ENCODE measurements at regions of chr1 and their contacts with region 1.

Region 1: DNA sequence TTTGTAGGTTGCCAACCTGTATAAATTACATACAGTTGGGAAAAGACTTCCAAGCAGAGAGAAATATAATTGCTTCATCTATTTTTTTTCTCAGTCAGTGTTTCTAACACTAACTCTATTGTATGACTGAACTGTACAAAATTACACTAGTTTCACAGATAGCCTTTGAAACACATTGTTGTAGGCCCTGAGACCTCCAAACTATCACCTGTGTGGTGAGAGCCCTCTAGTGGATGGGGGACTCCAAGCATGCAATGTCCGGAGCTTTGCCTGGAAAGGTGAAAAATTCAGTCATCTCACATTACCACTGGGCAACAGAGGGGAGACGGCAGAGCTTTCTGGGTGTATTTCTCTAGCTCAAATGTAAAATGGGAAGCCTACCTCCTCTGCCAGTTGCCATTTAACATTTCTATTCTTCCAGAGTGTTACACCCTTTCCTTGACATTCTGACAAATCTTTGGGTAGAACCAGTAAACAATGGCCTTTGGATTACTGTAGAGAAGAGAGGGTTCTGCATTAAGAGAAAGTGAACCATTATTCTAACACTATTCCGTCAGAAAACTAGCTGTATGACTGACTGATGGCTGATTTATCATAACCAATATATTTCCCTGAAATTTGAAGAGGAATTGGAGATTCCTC is 212.2 kb downstream of the LYPLAL1 start:
- DNase-seq: peak; percentile 64 to 72
- H3K4me3 ChIP-seq: no peak overlapping the region
- H3K4me3 Mint-ChIP-seq: no peak overlapping the region
- H3K27ac Mint-ChIP-seq: no peak overlapping the region
- H3K4me1 ChIP-seq: peaks cover 41% of the 10 kb centered on the region
- H3K4me1 Mint-ChIP-seq: peaks cover 10% of the 10 kb centered on the region
- H3K27me3 ChIP-seq: no peaks in the 10 kb centered on the region
- H3K27me3 Mint-ChIP-seq: no peaks in the 10 kb centered on the region
- CTCF ChIP-seq: peak; percentile 69 to 80

Region 2: DNA sequence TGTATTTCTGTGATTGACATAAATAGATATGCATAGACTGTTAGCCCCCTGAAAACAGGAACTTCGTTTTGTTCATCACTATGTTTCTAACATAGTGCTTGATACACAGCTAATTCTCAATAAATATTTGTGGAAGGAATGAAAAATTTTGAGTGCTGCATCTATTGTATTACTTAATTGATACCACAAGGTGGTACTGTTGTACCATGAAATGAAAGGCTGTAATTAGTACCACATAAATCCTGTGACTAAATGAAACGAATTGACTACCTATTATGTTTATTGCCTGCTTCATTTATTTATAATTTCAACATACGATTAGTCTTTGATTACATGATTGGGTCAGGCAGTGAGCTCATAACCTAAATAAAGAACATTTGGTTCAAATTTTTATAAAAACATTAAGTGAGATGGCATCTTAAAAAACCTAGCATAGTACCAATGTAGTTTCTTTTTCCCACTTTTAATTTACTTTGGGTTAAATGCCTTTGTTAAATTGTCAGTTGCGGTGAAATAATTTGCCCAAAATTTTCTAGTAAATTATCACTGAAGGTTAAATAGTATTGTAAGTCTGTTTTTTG is 1055.8 kb before region 1 on chr1:
- CTCF ChIA-PET with region 1: no interaction called
- POLR2A ChIA-PET with region 1: no interaction called
- intact Hi-C with region 1: loop called (anchors 10 kb)
- DNase-seq: peak in 1 of 2 experiments; percentile 9
- H3K4me3 ChIP-seq: no peak overlapping the region
- H3K4me3 Mint-ChIP-seq: no peak overlapping the region
- H3K27ac Mint-ChIP-seq: no peak overlapping the region
- H3K4me1 ChIP-seq: no peaks in the 10 kb centered on the region
- H3K4me1 Mint-ChIP-seq: no peaks in the 10 kb centered on the region
- H3K27me3 ChIP-seq: no peaks in the 10 kb centered on the region
- H3K27me3 Mint-ChIP-seq: no peaks in the 10 kb centered on the region
- CTCF ChIP-seq: peak; percentile 28 to 69

Region 3: GRCh38 chr1:219173758-219174588 is 211.9 kb before region 1 on chr1 and contains the start of gene LYPLAL1:
- CTCF ChIA-PET with region 1: interaction called, 4 read pairs
- POLR2A ChIA-PET with region 1: no interaction called
- intact Hi-C with region 1: loop called (anchors 10 kb)
- DNase-seq: peak; percentile 84 to 90
- H3K4me3 ChIP-seq: peak within 1 kb of the TSS; percentile 75
- H3K4me3 Mint-ChIP-seq: peak within 1 kb of the TSS; percentile 96
- H3K27ac Mint-ChIP-seq: peak within 1 kb of the TSS; percentile 94
- H3K4me1 ChIP-seq: 0 out of 2 replicates have a peak, but pooled peaks cover 4% of the 10 kb centered on the region
- H3K4me1 Mint-ChIP-seq: peaks cover 23% of the 10 kb centered on the region
- H3K27me3 ChIP-seq: no peaks in the 10 kb centered on the region
- H3K27me3 Mint-ChIP-seq: no peaks in the 10 kb centered on the region
- CTCF ChIP-seq: peak in 1 of 2 experiments; percentile 26
- total RNA-seq, gene LYPLAL1: 20.4 and 27.1 TPM in 2 replicates

Region 4: DNA sequence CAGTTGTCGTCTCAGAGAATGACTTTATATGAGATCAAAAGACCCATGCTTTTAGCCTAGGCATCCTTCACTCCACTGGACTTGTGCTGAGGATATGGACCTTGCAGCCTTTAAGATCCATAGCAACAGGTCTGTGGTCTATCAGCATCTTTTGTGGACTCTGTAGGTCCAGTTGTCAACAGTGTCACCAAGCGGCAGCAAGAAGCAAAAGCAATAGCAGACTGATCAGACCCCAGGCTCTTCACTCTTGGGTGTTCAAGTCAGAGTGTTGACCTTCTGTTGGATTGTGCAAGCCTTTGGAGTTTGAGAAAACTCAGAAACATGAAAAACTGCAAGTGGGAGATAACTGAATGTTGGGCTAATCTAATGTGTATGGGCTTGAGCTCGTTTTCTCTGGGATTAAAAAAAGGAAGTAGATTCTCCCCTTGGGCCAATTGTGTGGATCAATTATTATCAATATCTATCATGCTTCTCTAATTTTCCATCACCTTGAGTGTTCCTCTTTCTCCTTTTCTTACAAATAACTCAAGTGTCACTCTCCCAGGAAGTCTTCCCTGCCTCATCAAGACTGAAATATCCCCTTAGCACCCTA is 68.0 kb before region 1 on chr1:
- CTCF ChIA-PET with region 1: no interaction called
- POLR2A ChIA-PET with region 1: no interaction called
- intact Hi-C with region 1: loop called (anchors 5 kb)
- DNase-seq: peak; percentile 16 to 39
- H3K4me3 ChIP-seq: no peak overlapping the region
- H3K4me3 Mint-ChIP-seq: no peak overlapping the region
- H3K27ac Mint-ChIP-seq: no peak overlapping the region
- H3K4me1 ChIP-seq: peaks cover 4% of the 10 kb centered on the region; the same call in 1 of the 2 replicates
- H3K4me1 Mint-ChIP-seq: no peaks in the 10 kb centered on the region
- H3K27me3 ChIP-seq: no peaks in the 10 kb centered on the region
- H3K27me3 Mint-ChIP-seq: no peaks in the 10 kb centered on the region
- CTCF ChIP-seq: peak in 1 of 2 experiments; percentile 59

Region 5: GRCh38 chr1:219566951-219567947 is 181.3 kb after region 1 on chr1:
- CTCF ChIA-PET with region 1: interaction called, 3 read pairs
- POLR2A ChIA-PET with region 1: no interaction called
- intact Hi-C with region 1: loop called (anchors 1 kb)
- DNase-seq: peak in 1 of 2 experiments; percentile 20
- H3K4me3 ChIP-seq: no peak overlapping the region
- H3K4me3 Mint-ChIP-seq: no peak overlapping the region
- H3K27ac Mint-ChIP-seq: no peak overlapping the region
- H3K4me1 ChIP-seq: no peaks in the 10 kb centered on the region
- H3K4me1 Mint-ChIP-seq: no peaks in the 10 kb centered on the region
- H3K27me3 ChIP-seq: no peaks in the 10 kb centered on the region
- H3K27me3 Mint-ChIP-seq: peaks cover 3% of the 10 kb centered on the region
- CTCF ChIP-seq: peak; percentile 48 to 75

Measured in Caco-2 (cell line).